Activated B cell treated with CpG ODN at 0.5 μM for 24 hours (primary cell): ENCODE measurements at regions of chr3 and their contacts with region 1.

Region 1: GRCh38 chr3:129120254-129121004 is 1.2 kb downstream of the RAB43 start:
- DNase-seq: peak; percentile 72
- ATAC-seq: peak; percentile 65
- H3K4me3 Mint-ChIP-seq: peak overlapping the region; percentile 87
- H3K27ac Mint-ChIP-seq: peak overlapping the region; percentile 86
- H3K4me1 Mint-ChIP-seq: peaks cover 54% of the 10 kb centered on the region
- H3K27me3 Mint-ChIP-seq: no peaks in the 10 kb centered on the region
- CTCF ChIP-seq: no peak

Region 2: DNA sequence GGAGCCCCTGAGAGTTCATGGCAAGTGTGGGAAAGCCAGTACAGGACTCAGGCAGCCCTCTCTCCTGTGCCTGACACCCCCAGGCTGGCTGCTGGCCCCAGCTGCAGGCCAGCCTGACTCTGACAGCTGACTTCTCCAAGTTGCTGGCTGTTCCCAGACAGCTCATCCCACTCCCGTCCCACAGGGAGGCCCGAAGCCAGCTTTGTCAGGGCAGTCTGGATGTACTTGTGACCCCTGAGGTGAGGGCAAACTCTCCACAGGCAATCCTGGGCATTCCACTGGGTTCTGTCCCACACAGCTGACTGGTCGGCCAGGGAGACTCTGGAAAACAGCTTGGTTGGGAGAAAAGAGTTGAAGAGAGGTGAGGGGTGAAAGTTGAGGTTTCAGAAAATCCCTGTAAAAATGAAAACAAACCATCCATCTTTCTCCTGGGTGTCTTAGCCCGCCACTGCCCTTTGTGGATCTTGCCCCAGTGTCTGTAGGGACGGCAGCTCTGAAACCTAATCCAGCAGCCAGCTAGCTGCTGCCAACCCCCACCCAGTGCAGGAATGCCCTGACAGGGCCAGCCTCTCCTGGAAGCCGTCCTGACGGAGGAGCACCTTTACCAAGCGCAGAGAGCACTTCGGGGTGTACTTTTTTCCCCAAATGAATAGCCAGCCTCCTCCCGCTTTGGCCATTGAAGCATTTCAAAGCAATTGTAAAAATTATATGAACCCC is 741.6 kb before region 1 on chr3:
- CTCF ChIA-PET with region 1: no interaction called
- POLR2A ChIA-PET with region 1: no interaction called
- intact Hi-C with region 1: no loop called
- DNase-seq: no peak
- ATAC-seq: no peak
- H3K4me3 Mint-ChIP-seq: no peak overlapping the region
- H3K27ac Mint-ChIP-seq: no peak overlapping the region
- H3K4me1 Mint-ChIP-seq: peaks cover 15% of the 10 kb centered on the region
- H3K27me3 Mint-ChIP-seq: no peaks in the 10 kb centered on the region
- CTCF ChIP-seq: no peak

Region 3: GRCh38 chr3:128969993-128970739 is 150.3 kb before region 1 on chr3:
- CTCF ChIA-PET with region 1: interaction called, 6 read pairs
- POLR2A ChIA-PET with region 1: interaction called, 5 read pairs
- intact Hi-C with region 1: loop called (anchors 5 kb)
- DNase-seq: peak; percentile 28
- ATAC-seq: peak; percentile 50
- H3K4me3 Mint-ChIP-seq: no peak overlapping the region
- H3K27ac Mint-ChIP-seq: no peak overlapping the region
- H3K4me1 Mint-ChIP-seq: peaks cover 15% of the 10 kb centered on the region
- H3K27me3 Mint-ChIP-seq: no peaks in the 10 kb centered on the region
- CTCF ChIP-seq: peak; percentile 70

Region 4: GRCh38 chr3:129052675-129053074 is 67.8 kb before region 1 on chr3:
- CTCF ChIA-PET with region 1: interaction called, 21 read pairs
- POLR2A ChIA-PET with region 1: interaction called, 9 read pairs
- intact Hi-C with region 1: loop called (anchors 1 kb)
- DNase-seq: no peak
- ATAC-seq: no peak
- H3K4me3 Mint-ChIP-seq: no peak overlapping the region
- H3K27ac Mint-ChIP-seq: no peak overlapping the region
- H3K4me1 Mint-ChIP-seq: peaks cover 6% of the 10 kb centered on the region
- H3K27me3 Mint-ChIP-seq: peaks cover 23% of the 10 kb centered on the region
- CTCF ChIP-seq: no peak

Region 5: DNA sequence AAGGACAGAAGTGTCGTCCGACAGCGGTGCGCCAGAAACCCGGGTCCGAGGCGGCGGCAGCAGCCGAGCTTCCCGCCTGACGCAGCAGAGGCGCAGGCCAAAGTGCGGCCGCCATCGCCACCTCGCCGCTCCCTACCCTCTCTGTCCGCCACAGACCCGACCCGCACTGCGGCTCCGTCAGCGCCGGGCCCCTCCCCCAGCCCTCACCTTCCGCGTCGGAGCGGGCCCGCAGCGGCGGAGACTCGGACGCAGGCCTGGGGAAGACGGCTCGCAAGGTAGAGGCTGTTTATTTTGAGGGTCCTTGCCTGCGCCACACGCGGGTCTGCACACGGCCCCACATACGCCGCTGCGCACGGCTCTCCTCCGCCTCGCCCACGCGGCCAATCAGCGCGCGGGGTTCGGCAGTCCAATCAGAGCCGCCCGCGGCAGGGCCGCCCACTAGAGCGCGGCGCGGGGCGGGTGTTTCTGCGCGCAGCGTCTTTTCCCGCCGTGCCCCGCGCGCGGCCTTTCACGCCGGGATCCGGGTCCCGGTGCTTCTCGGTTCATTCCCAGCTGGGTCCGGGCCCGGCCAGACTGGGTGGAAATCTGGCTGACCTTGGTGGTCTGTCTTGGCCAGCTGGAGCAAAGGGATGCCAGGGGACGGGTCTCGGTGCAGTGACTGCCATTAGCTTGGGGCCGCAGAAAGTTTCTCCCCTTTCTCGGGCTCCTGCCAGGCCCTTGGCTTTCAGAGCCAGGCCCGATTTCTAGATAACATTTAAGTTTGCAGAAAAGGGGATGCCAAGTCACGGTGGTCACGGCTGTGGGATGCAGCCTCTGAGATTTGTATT is 63.4 kb after region 1 on chr3 and contains the start of gene CNBP:
- CTCF ChIA-PET with region 1: no interaction called
- POLR2A ChIA-PET with region 1: interaction called, 39 read pairs
- intact Hi-C with region 1: loop called (anchors 1 kb)
- DNase-seq: peak; percentile 92
- ATAC-seq: peak; percentile 95
- H3K4me3 Mint-ChIP-seq: peak within 1 kb of the TSS; percentile 95
- H3K27ac Mint-ChIP-seq: peak within 1 kb of the TSS; percentile 95
- H3K4me1 Mint-ChIP-seq: peaks cover 50% of the 10 kb centered on the region
- H3K27me3 Mint-ChIP-seq: no peaks in the 10 kb centered on the region
- CTCF ChIP-seq: no peak
- total RNA-seq, gene CNBP: 281 and 303 TPM in 2 replicates

Region 6: DNA sequence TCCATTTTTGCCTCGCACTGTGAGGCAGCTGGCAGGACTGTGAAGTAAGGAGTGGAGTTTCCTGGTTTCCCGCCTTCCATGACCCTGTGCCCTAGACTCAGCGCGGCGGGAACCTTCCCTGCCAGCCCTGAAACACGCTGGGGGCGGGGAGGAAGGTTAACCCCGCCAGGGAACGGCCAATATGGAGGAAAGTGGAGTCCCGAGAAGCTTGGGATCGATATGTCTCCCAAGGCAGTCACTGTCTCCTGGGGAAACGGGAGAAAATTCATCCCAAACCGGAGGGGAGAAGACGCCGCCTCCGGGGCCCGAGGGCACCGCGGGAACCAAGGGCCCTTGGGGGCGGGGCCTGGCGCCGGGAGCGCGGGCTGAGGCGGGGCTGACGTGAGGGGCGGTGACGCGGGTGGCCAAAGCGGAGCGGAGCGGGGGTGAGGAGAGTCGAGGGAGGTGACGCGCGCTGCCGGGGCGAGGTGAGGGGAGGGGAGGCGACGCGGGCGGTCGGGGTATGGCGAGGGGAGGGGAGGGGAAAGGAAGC is 158.1 kb after region 1 on chr3 and contains the start of gene HMCES:
- CTCF ChIA-PET with region 1: no interaction called
- POLR2A ChIA-PET with region 1: interaction called, 5 read pairs
- intact Hi-C with region 1: loop called (anchors 1 kb)
- DNase-seq: peak; percentile 91
- ATAC-seq: peak; percentile 62
- H3K4me3 Mint-ChIP-seq: peak within 1 kb of the TSS; percentile 91
- H3K27ac Mint-ChIP-seq: peak within 1 kb of the TSS; percentile 86
- H3K4me1 Mint-ChIP-seq: peaks cover 80% of the 10 kb centered on the region
- H3K27me3 Mint-ChIP-seq: no peaks in the 10 kb centered on the region
- CTCF ChIP-seq: no peak
- total RNA-seq, gene HMCES: 31.7 and 37.2 TPM in 2 replicates

Region 7: GRCh38 chr3:130111185-130111864 is 990.9 kb after region 1 on chr3:
- CTCF ChIA-PET with region 1: no interaction called
- POLR2A ChIA-PET with region 1: interaction called, 3 read pairs
- intact Hi-C with region 1: loop called (anchors 5 kb)
- DNase-seq: peak; percentile 94
- ATAC-seq: peak; percentile 100
- H3K4me3 Mint-ChIP-seq: peak overlapping the region; percentile 98
- H3K27ac Mint-ChIP-seq: peak overlapping the region; percentile 100
- H3K4me1 Mint-ChIP-seq: peaks cover 25% of the 10 kb centered on the region
- H3K27me3 Mint-ChIP-seq: no peaks in the 10 kb centered on the region
- CTCF ChIP-seq: no peak